Mammary epithelial cell (primary cell): ENCODE measurements at regions of chr4 and their contacts with region 1.

Region 1: GRCh38 chr4:53507671-53508286 is 83.5 kb downstream of the LNX1 start:
- DNase-seq: no peak
- H3K4me3 ChIP-seq: no peak overlapping the region
- H3K27ac ChIP-seq: no peak overlapping the region
- H3K4me1 ChIP-seq: no peaks in the 10 kb centered on the region
- H3K27me3 ChIP-seq: peaks cover 2% of the 10 kb centered on the region
- CTCF ChIP-seq: no peak

Region 2: GRCh38 chr4:53601251-53601764 is 93.5 kb after region 1 on chr4:
- CTCF ChIA-PET with region 1: no interaction called
- dilution Hi-C with region 1: no loop called
- in situ Hi-C with region 1: no loop called
- intact Hi-C with region 1: loop called (anchors 2 kb)
- DNase-seq: no peak
- H3K4me3 ChIP-seq: no peak overlapping the region
- H3K27ac ChIP-seq: no peak overlapping the region
- H3K4me1 ChIP-seq: no peaks in the 10 kb centered on the region
- H3K27me3 ChIP-seq: no peaks in the 10 kb centered on the region
- CTCF ChIP-seq: peak; percentile 39 to 61

Region 3: GRCh38 chr4:53653484-53654053 is 145.8 kb after region 1 on chr4:
- CTCF ChIA-PET with region 1: no interaction called
- dilution Hi-C with region 1: no loop called
- in situ Hi-C with region 1: no loop called
- intact Hi-C with region 1: loop called (anchors 5 kb)
- DNase-seq: peak; percentile 12
- H3K4me3 ChIP-seq: no peak overlapping the region
- H3K27ac ChIP-seq: no peak overlapping the region
- H3K4me1 ChIP-seq: peaks cover 12% of the 10 kb centered on the region
- H3K27me3 ChIP-seq: no peaks in the 10 kb centered on the region
- CTCF ChIP-seq: peak; percentile 4 to 32

Region 4: GRCh38 chr4:53804719-53805118 is 296.9 kb after region 1 on chr4:
- CTCF ChIA-PET with region 1: no interaction called
- dilution Hi-C with region 1: no loop called
- in situ Hi-C with region 1: no loop called
- intact Hi-C with region 1: loop called (anchors 1 kb)
- DNase-seq: peak; percentile 17
- H3K4me3 ChIP-seq: no peak overlapping the region
- H3K27ac ChIP-seq: no peak overlapping the region
- H3K4me1 ChIP-seq: no peaks in the 10 kb centered on the region
- H3K27me3 ChIP-seq: no peaks in the 10 kb centered on the region
- CTCF ChIP-seq: peak; percentile 81 to 83

Region 5: DNA sequence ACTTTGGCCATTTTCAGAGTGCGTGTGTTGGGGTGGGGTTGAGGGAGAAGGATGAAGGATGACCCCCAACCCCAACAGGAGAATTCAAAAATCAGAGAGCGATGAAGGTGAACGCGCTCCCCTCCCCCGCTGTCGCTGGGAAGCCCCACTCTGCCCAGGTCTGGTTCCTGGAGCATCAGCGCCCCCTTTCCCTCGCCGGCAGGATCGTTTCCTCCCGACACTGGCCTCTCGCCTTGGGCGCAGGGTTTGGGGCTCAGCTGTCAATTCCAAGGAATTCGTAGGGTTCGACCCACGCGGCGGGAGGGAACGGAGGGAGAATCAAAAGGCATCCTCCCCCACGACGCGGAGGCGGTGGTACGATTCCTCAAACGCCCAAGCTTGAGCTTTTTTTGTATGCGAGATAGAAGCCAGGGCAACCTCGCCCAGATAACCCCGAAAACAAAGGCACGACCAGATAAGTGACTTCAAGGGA is 720.3 kb after region 1 on chr4:
- CTCF ChIA-PET with region 1: no interaction called
- dilution Hi-C with region 1: no loop called
- in situ Hi-C with region 1: loop called in 1 of 2 experiments (anchors 25 kb)
- intact Hi-C with region 1: loop called (anchors 1 kb)
- DNase-seq: peak; percentile 65
- H3K4me3 ChIP-seq: peak overlapping the region; percentile 39 to 66 (median 53)
- H3K27ac ChIP-seq: no peak overlapping the region
- H3K4me1 ChIP-seq: peaks cover 24% of the 10 kb centered on the region
- H3K27me3 ChIP-seq: peaks cover 24% of the 10 kb centered on the region
- CTCF ChIP-seq: peak; percentile 88 to 95